Heart left ventricle (tissue), 16 donors: ENCODE measurements at regions of chr11 and their contacts with region 1.

Region 1: GRCh38 chr11:71086675-71087258 is 165.6 kb downstream of the SHANK2 start:
- DNase-seq: no peak
- ATAC-seq: peak in 1 of 4 donors; percentile 34
- H3K4me3 ChIP-seq: no peak overlapping the region
- H3K27ac ChIP-seq: no peak overlapping the region
- H3K4me1 ChIP-seq: no peaks in the 10 kb centered on the region
- H3K27me3 ChIP-seq: peaks cover 0 to 8% (median 0%) of the 10 kb centered on the region in 9 donors
- CTCF ChIP-seq: peak; percentile 20 to 48 (median 36)
- POLR2A ChIP-seq: no peak

Region 2: GRCh38 chr11:71372693-71373657 is 286.2 kb after region 1 on chr11:
- intact Hi-C with region 1: loop called in 1 of 10 experiments (anchors 5 kb)
- DNase-seq: no peak
- ATAC-seq: no peak
- H3K4me3 ChIP-seq: no peak overlapping the region
- H3K27ac ChIP-seq: no peak overlapping the region
- H3K4me1 ChIP-seq: no peaks in the 10 kb centered on the region
- H3K27me3 ChIP-seq: peaks cover 0 to 23% (median 3%) of the 10 kb centered on the region in 9 donors
- CTCF ChIP-seq: peak in 7 of 12 donors; percentile 7 to 32 (median 25)
- POLR2A ChIP-seq: no peak

Region 3: GRCh38 chr11:71420455-71421241 is 333.9 kb after region 1 on chr11:
- intact Hi-C with region 1: loop called in 1 of 10 experiments (anchors 5 kb)
- DNase-seq: peak in 1 of 5 donors; percentile 19
- ATAC-seq: peak in 2 of 4 donors; percentile 54 to 64
- H3K4me3 ChIP-seq: no peak overlapping the region
- H3K27ac ChIP-seq: no peak overlapping the region
- H3K4me1 ChIP-seq: no peaks in the 10 kb centered on the region
- H3K27me3 ChIP-seq: peaks cover 0 to 4% (median 0%) of the 10 kb centered on the region in 9 donors
- CTCF ChIP-seq: peak; percentile 30 to 65 (median 48)
- POLR2A ChIP-seq: no peak